ENCODE measurements at regions of chr13 and their contacts with region 1.

Region 1: GRCh38 chr13:51148952-51149573 is 38.0 kb upstream of the C13orf42 start:
- DNase-seq: peak; percentile 42
- H3K4me3 ChIP-seq: no peak overlapping the region
- H3K27ac ChIP-seq: no peak overlapping the region
- H3K4me1 ChIP-seq: no peaks in the 10 kb centered on the region
- H3K27me3 ChIP-seq: no peaks in the 10 kb centered on the region
- CTCF ChIP-seq: peak; percentile 24 to 74 (median 63)
- POLR2A ChIP-seq: no peak

Region 2: DNA sequence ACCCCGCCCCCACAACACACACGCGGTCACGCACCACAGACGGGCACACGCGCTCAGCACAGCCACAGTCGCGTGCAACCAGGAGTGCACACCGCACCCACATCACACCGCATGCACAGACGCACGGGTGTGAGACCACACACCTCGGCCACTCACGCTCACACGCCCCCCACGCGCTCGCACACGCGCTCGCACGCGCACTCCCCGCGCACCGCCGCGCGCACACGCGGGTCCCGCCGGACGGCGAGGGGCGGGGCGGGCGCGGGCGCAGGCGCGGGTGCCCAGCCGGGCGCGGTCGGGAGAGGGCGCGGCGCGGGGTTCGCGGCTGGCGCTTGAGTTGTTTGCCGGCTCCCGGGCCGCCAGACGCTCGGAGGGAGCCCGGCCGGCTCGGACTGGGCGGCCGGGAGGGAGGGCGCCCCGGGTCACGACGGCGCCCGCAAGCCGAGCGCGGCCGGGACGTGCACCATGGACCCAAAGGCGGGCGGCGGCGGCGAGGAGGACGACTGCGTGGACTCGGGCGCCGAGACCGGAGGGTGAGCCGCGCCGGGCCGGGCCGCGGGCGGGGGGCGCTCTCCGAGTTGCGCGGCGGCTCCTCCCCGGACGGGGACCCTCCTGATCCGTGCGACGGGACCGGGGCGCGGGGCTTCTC is 73.1 kb after region 1 on chr13 and contains the start of gene FAM124A:
- intact Hi-C with region 1: loop called (anchors 5 kb)
- DNase-seq: peak; percentile 37
- H3K4me3 ChIP-seq: peak within 1 kb of the TSS; percentile 81 to 87
- H3K27ac ChIP-seq: peak within 1 kb of the TSS; percentile 50 to 73
- H3K4me1 ChIP-seq: peaks cover 2% of the 10 kb centered on the region
- H3K27me3 ChIP-seq: no peaks in the 10 kb centered on the region
- CTCF ChIP-seq: peak in 2 of 4 experiments; percentile 36 to 61
- POLR2A ChIP-seq: no peak
- total RNA-seq, gene FAM124A: 5.5 to 11.2 TPM

Region 3: DNA sequence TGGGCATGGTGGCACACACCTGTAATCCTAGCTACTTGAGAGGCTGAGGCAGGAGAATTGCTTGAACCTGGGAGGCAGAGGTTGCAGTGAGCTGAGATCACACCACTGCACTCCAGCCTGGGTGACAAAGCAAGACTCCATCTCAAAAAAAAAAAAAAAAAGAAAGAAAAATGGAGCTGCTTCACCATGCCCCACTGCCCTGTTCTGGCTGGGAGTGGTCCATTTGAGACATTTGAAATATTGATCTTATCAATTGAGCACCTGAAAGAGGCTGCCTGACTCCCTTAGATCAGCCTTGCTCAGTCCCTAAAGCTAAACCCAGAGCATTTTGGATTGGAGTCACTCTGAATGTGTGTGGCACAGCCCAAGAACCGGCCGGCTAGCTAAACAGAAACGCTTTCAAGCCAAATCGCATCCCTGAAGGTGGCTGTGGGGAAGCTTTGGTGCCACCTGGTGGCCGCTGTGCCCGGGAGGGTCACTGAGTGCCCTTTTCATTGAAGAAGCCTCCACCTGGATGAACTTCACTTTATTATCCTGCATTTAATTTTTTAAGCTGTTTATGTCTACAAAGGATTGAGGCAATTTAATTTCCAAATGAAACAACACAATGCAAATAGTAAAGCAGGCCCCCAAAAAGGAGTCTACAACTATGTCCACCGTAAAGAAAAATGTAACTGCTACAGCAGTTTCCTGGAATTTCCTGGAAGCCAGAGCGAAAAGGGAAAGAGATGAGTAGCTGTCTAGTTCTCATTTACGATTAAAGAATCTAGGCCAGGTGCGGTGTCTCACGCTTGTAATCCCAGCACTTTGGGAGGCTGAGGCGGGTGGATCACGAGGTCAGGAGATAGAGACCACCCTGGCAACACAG is 137.3 kb after region 1 on chr13:
- intact Hi-C with region 1: loop called (anchors 2 kb)
- DNase-seq: peak; percentile 84
- H3K4me3 ChIP-seq: no peak overlapping the region
- H3K27ac ChIP-seq: no peak overlapping the region
- H3K4me1 ChIP-seq: no peaks in the 10 kb centered on the region
- H3K27me3 ChIP-seq: no peaks in the 10 kb centered on the region
- CTCF ChIP-seq: peak; percentile 83 to 99 (median 90)
- POLR2A ChIP-seq: no peak

Measured in prostate gland (tissue), 2 donors.